Motor neuron (in vitro differentiated cells): ENCODE measurements at regions of chr3 and their contacts with region 1.

Region 1: DNA sequence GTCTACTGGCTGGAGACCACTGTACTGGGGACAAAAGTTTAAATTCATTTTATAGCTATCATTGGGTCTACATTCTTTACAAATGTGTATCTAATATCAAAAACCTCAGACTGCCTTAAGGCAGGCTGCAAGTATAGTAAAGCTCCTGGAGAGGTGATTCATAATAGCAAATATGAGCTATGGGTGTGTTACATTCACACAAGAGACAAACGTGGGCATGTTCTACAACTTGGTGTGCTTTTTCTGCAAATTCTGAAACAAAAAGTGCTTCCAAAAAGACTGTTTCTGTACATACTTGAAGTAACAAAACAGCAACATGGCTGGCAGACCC is 1101.4 kb downstream of the ROBO1 start:
- ATAC-seq: peak in 3 of 8 experiments; percentile 89 to 95 (median 92)
- H3K4me3 ChIP-seq: no peak overlapping the region
- H3K27ac ChIP-seq: no peak overlapping the region
- H3K4me1 ChIP-seq: no peaks in the 10 kb centered on the region

Region 2: GRCh38 chr3:77207753-77208152 is 1458.7 kb before region 1 on chr3:
- in situ Hi-C with region 1: no loop called
- ATAC-seq: peak in 3 of 8 experiments; percentile 56 to 62 (median 59)
- H3K4me3 ChIP-seq: peak overlapping the region in 1 of 5 donors; percentile 16
- H3K27ac ChIP-seq: no peak overlapping the region
- H3K4me1 ChIP-seq: peaks cover 12 to 22% of the 10 kb centered on the region in 2 donors

Region 3: GRCh38 chr3:79027593-79027992 is 361.2 kb after region 1 on chr3:
- in situ Hi-C with region 1: loop called in 6 of 9 experiments (anchors 10 to 25 kb)
- ATAC-seq: no peak
- H3K4me3 ChIP-seq: no peak overlapping the region
- H3K27ac ChIP-seq: no peak overlapping the region
- H3K4me1 ChIP-seq: no peaks in the 10 kb centered on the region

Region 4: DNA sequence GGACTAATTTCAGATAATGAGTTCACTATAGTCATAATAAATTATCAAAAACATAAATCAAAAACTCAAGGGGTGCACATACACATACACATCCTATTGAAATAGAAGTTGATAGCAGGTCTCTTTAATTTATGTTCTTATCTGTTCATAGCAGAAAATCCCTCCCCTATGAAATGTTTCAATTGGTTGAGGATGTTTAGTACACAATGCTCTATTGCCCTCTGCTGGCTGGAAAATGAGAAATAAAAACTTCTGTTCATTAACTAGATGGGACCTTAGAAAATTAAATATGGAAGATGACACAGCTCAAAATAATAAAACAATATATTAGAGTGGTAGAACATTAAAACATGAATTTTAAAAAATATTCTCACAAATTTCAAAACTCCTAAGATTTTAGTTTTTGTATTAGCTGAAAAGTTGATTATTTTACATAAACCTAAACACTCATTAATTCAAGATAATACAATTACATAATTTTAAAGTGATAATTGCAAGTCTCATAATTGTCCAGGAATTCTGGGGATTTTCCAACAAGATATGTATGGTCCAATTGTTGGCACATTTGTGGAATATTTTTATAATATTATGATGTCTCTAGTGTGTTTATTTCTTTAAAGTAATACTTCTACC is 366.4 kb after region 1 on chr3:
- in situ Hi-C with region 1: loop called in 4 of 9 experiments (anchors 10 to 25 kb)
- ATAC-seq: peak in 4 of 8 experiments; percentile 14 to 63 (median 48)
- H3K4me3 ChIP-seq: no peak overlapping the region
- H3K27ac ChIP-seq: no peak overlapping the region
- H3K4me1 ChIP-seq: no peaks in the 10 kb centered on the region